Heart right ventricle (tissue), 16 donors: ENCODE measurements at regions of chr6 and their contacts with region 1.

Region 1: GRCh38 chr6:109482905-109483735 is at the start of gene ZBTB24:
- DNase-seq: peak; percentile 87 to 93
- ATAC-seq: peak; percentile 97 to 98 (median 98)
- H3K4me3 ChIP-seq: peak within 1 kb of the TSS; percentile 75 to 100 (median 92)
- H3K27ac ChIP-seq: peak within 1 kb of the TSS in 9 of 10 donors; percentile 66 to 94 (median 83)
- H3K4me1 ChIP-seq: peaks cover 4 to 50% (median 45%) of the 10 kb centered on the region in 9 donors
- H3K27me3 ChIP-seq: no peaks in the 10 kb centered on the region
- CTCF ChIP-seq: no peak
- total RNA-seq, gene ZBTB24: 2.4 to 4.0 (median 3.3) TPM

Region 2: GRCh38 chr6:107957909-107958688 is 1525.0 kb before region 1 on chr6 and contains the start of gene SEC63:
- intact Hi-C with region 1: loop called in 1 of 10 experiments (anchors 10 kb)
- DNase-seq: peak; percentile 97 to 99
- ATAC-seq: peak; percentile 98 to 100 (median 99)
- H3K4me3 ChIP-seq: peak within 1 kb of the TSS; percentile 65 to 93 (median 78)
- H3K27ac ChIP-seq: peak within 1 kb of the TSS; percentile 68 to 95 (median 88)
- H3K4me1 ChIP-seq: peaks cover 5 to 33% (median 24%) of the 10 kb centered on the region in 9 donors
- H3K27me3 ChIP-seq: no peaks in the 10 kb centered on the region
- CTCF ChIP-seq: no peak
- total RNA-seq, gene SEC63: 42.4 to 68.3 (median 54.2) TPM

Region 3: DNA sequence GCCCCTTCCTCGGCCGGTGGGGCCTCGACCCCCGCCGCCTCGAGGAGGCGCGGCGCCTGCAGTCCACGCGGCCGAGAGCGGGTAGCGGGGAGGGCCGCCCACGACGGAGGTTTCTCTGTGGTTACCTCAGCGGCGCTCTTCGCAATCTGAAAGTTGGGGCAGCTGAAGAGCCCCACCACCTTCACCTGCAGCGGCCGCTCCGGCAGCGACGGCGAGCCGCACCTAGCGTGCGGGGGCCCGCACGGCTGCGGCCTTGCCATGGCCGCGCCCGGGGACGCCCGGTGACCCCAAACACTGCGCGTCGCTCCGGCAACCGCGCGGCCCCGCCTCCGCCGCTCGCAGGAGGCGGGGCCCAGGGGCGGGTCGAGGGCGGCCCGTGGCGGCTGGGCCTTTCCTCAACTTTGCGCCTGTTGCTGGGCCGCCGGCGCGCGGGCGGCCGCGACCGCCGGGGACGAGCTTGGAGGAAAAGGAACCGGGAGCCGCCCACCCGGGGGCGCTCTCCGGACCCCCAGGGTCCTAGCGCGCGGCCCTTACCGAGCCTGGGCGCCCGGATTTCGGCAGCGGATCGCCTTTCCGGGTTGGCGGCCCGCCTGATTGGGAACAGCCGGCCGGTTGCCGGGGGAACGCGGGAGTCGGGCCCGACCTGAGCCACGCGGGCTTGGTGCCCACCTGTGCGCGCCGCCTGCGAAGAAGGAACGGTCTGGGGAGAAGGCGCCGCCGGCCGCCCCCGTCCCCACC is 42.6 kb before region 1 on chr6 and contains the starts of genes PPIL6 and SMPD2:
- intact Hi-C with region 1: loop called in 2 of 10 experiments (anchors 2 to 5 kb)
- DNase-seq: peak; percentile 90 to 92
- ATAC-seq: peak; percentile 90 to 97 (median 95)
- H3K4me3 ChIP-seq: peak within 1 kb of the TSS; percentile 65 to 97 (median 88)
- H3K27ac ChIP-seq: peak within 1 kb of the TSS; percentile 10 to 94 (median 86)
- H3K4me1 ChIP-seq: peaks cover 9 to 27% (median 15%) of the 10 kb centered on the region in 9 donors
- H3K27me3 ChIP-seq: no peaks in the 10 kb centered on the region
- CTCF ChIP-seq: peak; percentile 8 to 67 (median 44)
- total RNA-seq, gene PPIL6: 1.4 to 5.2 (median 3.0) TPM
- total RNA-seq, gene SMPD2: 2.1 to 6.4 (median 3.8) TPM

Region 4: GRCh38 chr6:109461733-109462526 is 21.2 kb before region 1 on chr6:
- intact Hi-C with region 1: loop called in 1 of 10 experiments (anchors 2 kb)
- DNase-seq: no peak
- ATAC-seq: no peak
- H3K4me3 ChIP-seq: no peak overlapping the region
- H3K27ac ChIP-seq: no peak overlapping the region
- H3K4me1 ChIP-seq: peaks cover 0 to 29% (median 16%) of the 10 kb centered on the region in 9 donors
- H3K27me3 ChIP-seq: no peaks in the 10 kb centered on the region
- CTCF ChIP-seq: no peak